ENCODE measurements at regions of chr19 and their contacts with region 1.

Region 1: GRCh38 chr19:49430678-49431329 is 5.6 kb downstream of the GFY start:
- DNase-seq: no peak
- ATAC-seq: no peak
- H3K4me3 Mint-ChIP-seq: no peak overlapping the region
- H3K27ac Mint-ChIP-seq: no peak overlapping the region
- H3K4me1 Mint-ChIP-seq: peaks cover 34% of the 10 kb centered on the region
- H3K27me3 Mint-ChIP-seq: peaks cover 92% of the 10 kb centered on the region

Region 2: DNA sequence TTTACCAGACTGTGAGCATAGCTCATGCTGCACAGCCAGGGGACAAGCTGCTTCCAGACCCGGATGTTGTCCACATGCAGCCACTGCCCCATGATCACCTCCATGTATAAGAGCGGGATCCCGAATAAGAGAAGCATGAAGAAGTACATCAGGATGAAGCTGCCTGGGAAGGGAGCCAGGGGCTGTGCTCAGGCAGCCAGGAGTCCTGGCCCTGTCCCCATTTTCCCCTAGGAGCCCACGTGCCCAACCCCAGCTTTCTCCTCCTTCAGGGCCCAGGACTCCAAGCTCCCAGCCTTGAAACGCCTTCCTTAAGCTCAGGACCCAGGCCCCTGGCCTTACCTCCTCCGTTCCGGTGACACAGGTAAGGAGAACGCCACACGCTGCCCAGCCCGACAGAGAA is 175.1 kb before region 1 on chr19:
- CTCF ChIA-PET with region 1: no interaction called
- DNase-seq: no peak
- ATAC-seq: no peak
- H3K4me3 Mint-ChIP-seq: no peak overlapping the region
- H3K27ac Mint-ChIP-seq: no peak overlapping the region
- H3K4me1 Mint-ChIP-seq: no peaks in the 10 kb centered on the region
- H3K27me3 Mint-ChIP-seq: peaks cover 29% of the 10 kb centered on the region

Region 3: GRCh38 chr19:49294401-49294800 is 136.4 kb before region 1 on chr19:
- CTCF ChIA-PET with region 1: no interaction called
- DNase-seq: no peak
- ATAC-seq: no peak
- H3K4me3 Mint-ChIP-seq: no peak overlapping the region
- H3K27ac Mint-ChIP-seq: no peak overlapping the region
- H3K4me1 Mint-ChIP-seq: no peaks in the 10 kb centered on the region
- H3K27me3 Mint-ChIP-seq: peaks cover 3% of the 10 kb centered on the region

Region 4: DNA sequence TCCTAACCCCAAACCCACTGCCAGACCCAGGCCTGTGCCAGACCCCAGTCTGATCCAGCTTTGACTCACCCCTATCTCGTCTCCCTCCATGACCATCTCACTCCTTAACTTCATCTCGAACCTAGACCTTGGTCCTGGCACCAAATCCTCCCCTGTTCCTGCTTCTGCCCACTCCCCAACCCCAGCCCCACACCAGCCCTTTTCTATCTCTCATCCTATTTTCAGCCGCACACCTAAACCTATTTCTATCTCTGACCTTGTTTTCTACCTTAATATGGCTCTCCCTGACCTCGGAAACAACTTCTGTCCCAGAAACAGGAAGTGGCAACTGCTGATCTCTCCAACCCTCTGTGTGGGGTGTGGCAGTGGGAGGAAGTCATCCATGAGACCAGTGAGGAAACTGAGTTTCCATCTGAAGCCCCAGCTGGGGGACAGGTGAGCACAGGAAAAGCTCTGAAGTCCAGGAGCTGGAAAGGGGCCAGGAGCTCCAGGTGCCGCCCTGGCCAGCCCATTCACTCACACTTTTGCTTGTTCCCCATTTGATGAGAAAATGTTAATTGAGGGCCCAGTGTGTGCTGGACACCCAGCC is 21.3 kb before region 1 on chr19:
- CTCF ChIA-PET with region 1: interaction called, 11 read pairs
- DNase-seq: peak; percentile 72
- ATAC-seq: peak; percentile 84
- H3K4me3 Mint-ChIP-seq: peak overlapping the region; percentile 51
- H3K27ac Mint-ChIP-seq: peak overlapping the region; percentile 85
- H3K4me1 Mint-ChIP-seq: peaks cover 41% of the 10 kb centered on the region
- H3K27me3 Mint-ChIP-seq: no peaks in the 10 kb centered on the region

Region 5: DNA sequence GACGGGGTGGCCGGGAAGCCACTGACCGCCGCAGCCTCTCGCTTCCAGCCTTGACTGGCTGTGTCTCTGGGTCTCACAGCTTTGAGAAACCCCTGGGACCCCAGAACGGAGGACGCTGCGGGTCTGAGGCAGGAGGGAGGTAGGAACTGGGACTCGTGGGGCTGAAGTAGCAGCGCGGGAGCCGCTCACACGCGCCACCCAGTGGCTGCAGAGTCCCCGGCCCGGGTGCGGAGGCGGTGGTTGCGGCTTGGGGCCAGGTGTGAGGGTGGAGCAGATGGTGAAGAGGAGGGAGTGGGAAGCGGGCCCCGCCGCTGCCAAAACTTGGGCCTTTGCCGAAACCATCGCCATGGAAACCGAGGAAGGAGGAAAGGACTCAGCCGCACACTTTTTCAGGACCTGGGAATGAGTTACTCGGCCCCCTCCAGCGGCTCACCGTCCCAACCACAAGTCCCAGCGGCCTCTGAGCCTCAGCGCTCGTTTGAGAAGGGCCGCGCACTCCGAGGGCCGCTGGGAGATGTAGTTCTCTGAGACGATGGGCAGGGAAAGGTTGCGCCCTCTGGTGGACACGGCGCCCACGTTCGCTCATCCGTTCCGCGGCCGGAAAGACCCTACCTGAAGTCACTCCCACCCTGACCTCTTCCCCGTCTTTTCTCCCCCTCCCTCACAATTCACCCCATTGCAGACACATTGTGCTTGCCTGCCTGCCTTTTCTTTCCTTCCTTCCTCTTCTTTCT is 12.7 kb after region 1 on chr19:
- CTCF ChIA-PET with region 1: interaction called, 11 read pairs
- DNase-seq: peak; percentile 96
- ATAC-seq: peak; percentile 85
- H3K4me3 Mint-ChIP-seq: peak overlapping the region; percentile 78
- H3K27ac Mint-ChIP-seq: peak overlapping the region; percentile 80
- H3K4me1 Mint-ChIP-seq: peaks cover 51% of the 10 kb centered on the region
- H3K27me3 Mint-ChIP-seq: peaks cover 36% of the 10 kb centered on the region

Region 6: DNA sequence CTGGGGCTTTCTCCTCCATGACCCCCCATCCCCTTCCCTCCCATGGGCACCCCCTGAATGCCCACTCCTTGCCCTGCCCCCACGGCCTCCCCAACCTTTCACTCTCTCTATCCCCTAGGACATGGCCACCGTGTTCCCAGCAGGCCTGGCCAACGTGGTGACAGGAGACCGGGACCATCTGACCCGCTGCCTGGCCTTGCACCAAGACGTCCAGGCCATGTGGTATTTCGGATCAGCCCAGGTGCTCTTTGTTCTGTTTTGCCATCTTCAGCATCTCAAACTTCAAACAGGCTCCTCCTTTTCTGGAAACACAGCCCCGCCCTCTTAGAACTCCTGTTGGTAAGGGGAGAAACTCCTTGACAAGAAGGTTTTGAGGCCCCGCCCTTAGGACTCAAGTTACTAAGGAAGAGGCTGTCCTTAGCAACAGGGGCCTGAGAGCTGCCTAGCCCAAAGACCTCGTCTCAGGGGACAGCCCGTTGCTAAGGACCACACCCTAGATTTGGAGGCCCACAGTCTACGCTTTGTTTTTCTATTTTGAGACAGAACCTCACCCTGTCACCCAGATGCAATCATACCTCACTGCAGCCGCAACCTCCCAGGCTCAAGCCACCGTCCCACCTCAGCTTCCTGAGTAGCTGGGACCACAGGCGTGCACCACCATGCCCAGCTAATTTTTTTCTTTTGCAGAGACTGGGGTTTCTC is 38.1 kb after region 1 on chr19:
- CTCF ChIA-PET with region 1: interaction called, 10 read pairs
- DNase-seq: peak; percentile 98
- ATAC-seq: peak; percentile 78
- H3K4me3 Mint-ChIP-seq: peak overlapping the region; percentile 69
- H3K27ac Mint-ChIP-seq: peak overlapping the region; percentile 99
- H3K4me1 Mint-ChIP-seq: peaks cover 52% of the 10 kb centered on the region
- H3K27me3 Mint-ChIP-seq: no peaks in the 10 kb centered on the region